ENCODE measurements at regions of chr9 and their contacts with region 1.

Region 1: DNA sequence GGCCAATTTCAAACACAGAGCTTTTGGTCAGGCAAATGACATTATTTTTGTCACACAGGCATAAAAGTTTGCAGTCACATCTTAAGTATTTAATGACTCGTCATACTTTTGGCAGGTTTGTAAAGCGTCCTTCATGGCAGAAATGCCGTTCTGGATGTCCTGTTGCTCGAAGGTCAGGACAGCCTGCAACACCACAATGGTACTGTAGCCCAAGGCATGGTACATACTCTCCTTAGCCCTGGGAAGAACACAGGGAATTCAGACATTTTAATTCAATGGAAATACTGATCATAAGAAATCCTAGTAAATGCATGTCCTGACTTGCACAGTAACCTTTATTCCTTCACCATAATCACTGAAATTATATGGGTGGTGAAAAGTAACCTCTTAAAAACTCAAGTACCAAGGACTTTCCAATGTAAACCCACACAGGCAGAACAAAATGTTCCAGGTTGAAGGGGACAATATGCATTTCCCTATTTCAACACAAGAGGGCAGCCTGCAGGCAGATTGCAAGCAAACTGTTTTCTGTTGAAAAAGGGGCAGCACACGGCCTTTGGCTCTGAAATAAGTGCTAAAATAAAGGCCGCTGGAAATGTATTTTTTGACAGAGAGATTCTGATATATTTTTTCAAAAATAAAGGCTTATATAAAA is 95.7 kb downstream of the TTC39B start:
- DNase-seq: peak in 3 of 6 donors; percentile 38 to 64 (median 44)
- ATAC-seq: peak; percentile 66 to 94 (median 90)
- H3K4me3 ChIP-seq: no peak overlapping the region
- H3K27ac ChIP-seq: no peak overlapping the region
- H3K4me1 ChIP-seq: no peaks in the 10 kb centered on the region
- H3K27me3 ChIP-seq: no peaks in the 10 kb centered on the region
- CTCF ChIP-seq: peak; percentile 58 to 89 (median 77)

Region 2: DNA sequence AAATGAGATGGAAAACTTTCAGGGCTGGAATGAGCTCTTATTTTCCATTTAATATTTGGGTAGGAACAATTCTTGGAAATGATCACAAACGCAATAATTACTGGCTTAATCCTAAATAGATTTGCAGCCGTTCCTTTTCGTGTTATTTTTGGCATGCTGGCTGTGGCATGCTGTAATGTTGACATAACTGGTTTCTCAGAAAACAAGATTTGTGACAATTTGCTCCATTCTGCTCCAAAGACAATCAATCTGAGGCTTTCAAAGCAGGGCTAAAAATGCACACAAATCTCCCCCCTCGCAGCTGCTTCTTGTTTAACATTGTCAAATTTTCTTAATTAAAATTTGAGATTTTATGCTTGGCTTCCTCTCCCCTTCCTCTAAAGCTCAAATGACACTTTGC is 55.5 kb before region 1 on chr9:
- intact Hi-C with region 1: loop called in 1 of 3 experiments (anchors 10 kb)
- DNase-seq: no peak
- ATAC-seq: peak; percentile 63 to 83 (median 73)
- H3K4me3 ChIP-seq: no peak overlapping the region
- H3K27ac ChIP-seq: no peak overlapping the region
- H3K4me1 ChIP-seq: peaks cover 0 to 10% (median 6%) of the 10 kb centered on the region in 3 donors
- H3K27me3 ChIP-seq: no peaks in the 10 kb centered on the region
- CTCF ChIP-seq: no peak

Measured in pancreas (tissue), 10 donors.